Activated naive CD4-positive, alpha-beta T cell treated with anti-CD3 and anti-CD28 coated beads for 36 hours (primary cell): ENCODE measurements at regions of chr7 and their contacts with region 1.

Region 1: GRCh38 chr7:92528188-92528957 is at the starts of genes PEX1 and RBM48:
- DNase-seq: peak; percentile 97
- H3K4me3 Mint-ChIP-seq: peak within 1 kb of the TSS; percentile 84
- H3K27ac Mint-ChIP-seq: peak within 1 kb of the TSS; percentile 91
- H3K4me1 Mint-ChIP-seq: peaks cover 22% of the 10 kb centered on the region
- H3K27me3 Mint-ChIP-seq: no peaks in the 10 kb centered on the region
- total RNA-seq, gene PEX1: 12.9 to 13.2 TPM
- total RNA-seq, gene RBM48: 11.3 to 12.9 TPM

Region 2: GRCh38 chr7:91940572-91941341 is 587.6 kb before region 1 on chr7 and contains the start of gene AKAP9:
- CTCF ChIA-PET with region 1: interaction called, 5 read pairs
- intact Hi-C with region 1: loop called (anchors 1 kb)
- DNase-seq: peak; percentile 91
- H3K4me3 Mint-ChIP-seq: peak within 1 kb of the TSS; percentile 90
- H3K27ac Mint-ChIP-seq: peak within 1 kb of the TSS; percentile 94
- H3K4me1 Mint-ChIP-seq: peaks cover 29% of the 10 kb centered on the region
- H3K27me3 Mint-ChIP-seq: no peaks in the 10 kb centered on the region
- total RNA-seq, gene AKAP9: 20.0 to 26.2 TPM

Region 3: GRCh38 chr7:92245487-92246362 is 282.6 kb before region 1 on chr7 and contains the starts of genes ANKIB1 and KRIT1:
- CTCF ChIA-PET with region 1: no interaction called
- intact Hi-C with region 1: loop called (anchors 1 kb)
- DNase-seq: peak; percentile 91
- H3K4me3 Mint-ChIP-seq: peak within 1 kb of the TSS; percentile 92
- H3K27ac Mint-ChIP-seq: peak within 1 kb of the TSS; percentile 95
- H3K4me1 Mint-ChIP-seq: peaks cover 33% of the 10 kb centered on the region
- H3K27me3 Mint-ChIP-seq: no peaks in the 10 kb centered on the region
- total RNA-seq, gene ANKIB1: 37.9 to 38.4 TPM
- total RNA-seq, gene KRIT1: 21.5 to 27.9 TPM

Region 4: GRCh38 chr7:92609921-92610518 is 81.6 kb after region 1 on chr7:
- CTCF ChIA-PET with region 1: interaction called, 4 read pairs
- intact Hi-C with region 1: loop called (anchors 1 kb)
- DNase-seq: no peak
- H3K4me3 Mint-ChIP-seq: no peak overlapping the region
- H3K27ac Mint-ChIP-seq: no peak overlapping the region
- H3K4me1 Mint-ChIP-seq: peaks cover 23% of the 10 kb centered on the region
- H3K27me3 Mint-ChIP-seq: no peaks in the 10 kb centered on the region

Region 5: DNA sequence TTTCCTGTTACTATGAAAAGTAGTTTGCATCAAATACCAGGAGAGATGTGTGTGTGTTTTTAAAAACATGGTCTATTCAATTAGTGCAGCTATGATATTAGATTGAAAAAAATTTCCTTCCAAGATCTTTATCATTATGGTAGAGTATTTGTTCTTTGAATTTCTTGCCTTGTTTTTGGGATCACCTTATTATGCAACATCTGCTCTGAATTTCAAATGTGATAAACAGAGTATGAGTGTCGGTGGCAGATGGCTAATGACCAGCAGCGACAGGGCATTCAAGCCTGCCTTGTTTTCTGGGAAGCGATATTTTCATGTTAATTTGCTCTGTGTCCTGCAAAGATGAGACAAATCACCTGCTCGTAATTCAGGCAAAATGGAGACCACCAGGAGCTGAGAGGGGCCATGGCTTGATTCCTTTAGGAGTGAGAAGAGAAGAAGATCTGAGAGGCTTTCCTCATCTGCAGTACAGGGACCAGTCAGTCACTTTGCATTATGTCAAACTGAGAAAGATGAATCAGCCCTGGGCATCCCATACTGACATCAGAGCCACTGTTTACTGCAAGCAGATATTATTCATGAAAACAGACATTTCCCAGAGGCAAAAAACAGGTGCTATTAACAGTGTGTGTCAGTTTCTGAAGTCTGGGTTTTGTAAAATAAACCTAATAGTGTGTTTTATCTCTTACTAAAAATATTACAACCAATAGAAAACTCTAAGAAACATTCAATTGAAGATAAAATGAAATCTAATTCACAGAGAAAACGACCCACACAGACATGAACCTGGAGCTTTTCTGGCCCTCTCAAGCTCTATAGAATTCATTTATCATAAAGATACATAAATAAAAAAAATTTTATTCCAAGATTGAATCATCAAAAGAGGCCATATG is 240.4 kb after region 1 on chr7:
- CTCF ChIA-PET with region 1: no interaction called
- intact Hi-C with region 1: loop called (anchors 5 kb)
- DNase-seq: peak; percentile 76
- H3K4me3 Mint-ChIP-seq: peak overlapping the region; percentile 48
- H3K27ac Mint-ChIP-seq: peak overlapping the region; percentile 92
- H3K4me1 Mint-ChIP-seq: peaks cover 70% of the 10 kb centered on the region
- H3K27me3 Mint-ChIP-seq: no peaks in the 10 kb centered on the region

Region 6: GRCh38 chr7:93055543-93056107 is 527.3 kb after region 1 on chr7:
- CTCF ChIA-PET with region 1: no interaction called
- intact Hi-C with region 1: loop called (anchors 1 kb)
- DNase-seq: no peak
- H3K4me3 Mint-ChIP-seq: no peak overlapping the region
- H3K27ac Mint-ChIP-seq: no peak overlapping the region
- H3K4me1 Mint-ChIP-seq: peaks cover 11% of the 10 kb centered on the region
- H3K27me3 Mint-ChIP-seq: peaks cover 7% of the 10 kb centered on the region